ENCODE measurements at regions of chr12 and their contacts with region 1.

Region 1: GRCh38 chr12:101773650-101774162 is 34.4 kb upstream of the SYCP3 start:
- DNase-seq: peak in 3 of 4 donors; percentile 38 to 68 (median 59)
- ATAC-seq: peak; percentile 96
- H3K4me3 ChIP-seq: no peak overlapping the region
- H3K27ac ChIP-seq: no peak overlapping the region
- H3K4me1 ChIP-seq: peaks cover 0 to 42% of the 10 kb centered on the region in 2 donors
- H3K27me3 ChIP-seq: no peaks in the 10 kb centered on the region
- CTCF ChIP-seq: peak; percentile 93 to 94

Region 2: GRCh38 chr12:101714877-101715444 is 58.7 kb before region 1 on chr12:
- intact Hi-C with region 1: no loop called
- DNase-seq: no peak
- ATAC-seq: peak; percentile 23
- H3K4me3 ChIP-seq: no peak overlapping the region
- H3K27ac ChIP-seq: no peak overlapping the region
- H3K4me1 ChIP-seq: peaks cover 4 to 18% of the 10 kb centered on the region in 2 donors
- H3K27me3 ChIP-seq: no peaks in the 10 kb centered on the region
- CTCF ChIP-seq: no peak

Region 3: DNA sequence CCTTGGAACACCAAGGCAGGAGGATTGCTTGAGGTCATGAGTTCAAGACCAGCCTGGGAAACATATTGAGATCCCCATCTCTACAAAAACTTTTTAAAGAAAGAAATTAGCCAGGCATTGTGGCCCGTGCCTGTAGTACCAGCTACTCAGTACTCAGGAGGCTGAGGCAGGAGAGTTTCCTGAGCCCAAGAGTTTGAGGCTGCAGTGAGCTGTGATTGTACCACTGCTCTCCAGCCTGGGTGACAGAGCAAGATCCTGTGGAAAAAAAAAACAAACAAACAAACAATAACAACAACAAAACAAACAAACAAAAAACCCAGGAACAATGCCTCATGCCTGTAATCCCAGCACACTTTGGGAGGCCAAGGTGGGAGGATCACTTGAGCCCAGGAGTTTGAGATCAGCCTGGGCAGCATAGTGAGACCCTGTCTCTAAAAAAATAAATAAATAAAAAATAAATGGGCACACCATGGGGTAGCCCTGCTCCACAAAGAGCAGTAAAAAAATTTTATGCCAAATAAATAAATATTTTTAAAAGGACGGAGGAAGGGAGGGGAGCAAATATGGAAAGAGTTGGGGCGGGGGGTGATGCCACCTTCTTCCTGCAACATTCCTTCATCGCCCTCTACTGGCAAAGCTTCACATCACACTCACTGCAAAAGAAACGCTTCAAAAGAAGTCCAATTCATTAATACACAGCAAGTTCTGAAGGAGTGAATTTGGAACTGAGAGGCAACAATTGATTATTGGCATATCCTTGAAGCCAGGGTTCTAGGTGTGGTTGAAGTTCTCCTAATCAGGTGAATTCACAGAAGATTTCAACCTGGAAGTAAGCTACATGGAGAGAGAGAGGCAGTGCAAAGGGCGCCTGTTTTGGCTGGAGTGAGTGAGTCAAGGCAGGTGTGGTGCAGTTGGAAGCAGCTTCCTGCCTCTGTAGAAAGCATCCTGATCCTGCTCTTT is 65.9 kb after region 1 on chr12:
- intact Hi-C with region 1: loop called (anchors 5 to 10 kb)
- DNase-seq: peak in 3 of 4 donors; percentile 37 to 65 (median 46)
- ATAC-seq: peak; percentile 92
- H3K4me3 ChIP-seq: no peak overlapping the region
- H3K27ac ChIP-seq: no peak overlapping the region
- H3K4me1 ChIP-seq: peaks cover 0 to 11% of the 10 kb centered on the region in 2 donors
- H3K27me3 ChIP-seq: no peaks in the 10 kb centered on the region
- CTCF ChIP-seq: peak; percentile 76 to 84